ENCODE measurements at regions of chr2 and their contacts with region 1.

Region 1: GRCh38 chr2:55718165-55719008 is 24.7 kb upstream of the PNPT1 start:
- DNase-seq: no peak
- H3K4me3 ChIP-seq: no peak overlapping the region
- H3K27me3 ChIP-seq: no peaks in the 10 kb centered on the region
- CTCF ChIP-seq: peak; percentile 73

Region 2: GRCh38 chr2:55732854-55733253 is 14.5 kb after region 1 on chr2:
- CTCF ChIA-PET with region 1: interaction called, 12 read pairs
- POLR2A ChIA-PET with region 1: no interaction called
- DNase-seq: no peak
- H3K4me3 ChIP-seq: no peak overlapping the region
- H3K27me3 ChIP-seq: no peaks in the 10 kb centered on the region
- CTCF ChIP-seq: no peak

Region 3: GRCh38 chr2:55961318-55961911 is 243.0 kb after region 1 on chr2:
- CTCF ChIA-PET with region 1: interaction called, 24 read pairs
- POLR2A ChIA-PET with region 1: no interaction called
- DNase-seq: no peak
- H3K4me3 ChIP-seq: no peak overlapping the region
- H3K27me3 ChIP-seq: no peaks in the 10 kb centered on the region
- CTCF ChIP-seq: peak; percentile 66

Region 4: DNA sequence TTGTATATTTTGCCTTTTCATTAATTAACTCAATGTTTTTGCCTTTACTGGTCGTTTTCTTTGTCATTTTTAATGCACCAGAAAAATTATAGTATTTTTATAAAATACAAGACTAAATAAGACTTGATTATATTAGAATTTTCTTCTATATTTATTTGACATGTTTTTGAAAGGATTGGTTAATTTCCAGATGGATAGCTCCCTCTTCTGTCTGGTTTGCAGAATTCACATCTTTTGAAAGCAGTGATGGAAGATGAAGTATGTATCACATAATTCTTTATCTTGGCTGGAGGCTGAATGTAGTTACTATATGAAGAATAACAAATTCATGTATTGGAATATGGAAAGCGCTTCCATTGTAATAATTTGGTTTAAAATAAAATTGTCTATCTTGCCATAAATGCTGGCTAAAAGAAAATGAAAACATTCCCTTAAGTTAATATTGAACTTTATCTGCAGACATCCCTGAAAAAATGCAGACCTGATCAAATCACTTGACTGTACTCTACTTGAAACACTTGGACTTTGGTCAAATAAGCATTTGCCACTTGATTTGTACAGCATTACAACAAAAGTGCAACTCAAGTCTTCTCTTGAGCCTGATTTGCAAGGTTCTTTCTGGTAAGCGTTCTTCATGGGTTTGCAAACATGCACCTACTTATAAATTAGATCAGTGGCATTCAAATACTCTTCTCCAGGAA is 291.5 kb after region 1 on chr2:
- CTCF ChIA-PET with region 1: interaction called, 31 read pairs
- POLR2A ChIA-PET with region 1: no interaction called
- DNase-seq: no peak
- H3K4me3 ChIP-seq: no peak overlapping the region
- H3K27me3 ChIP-seq: no peaks in the 10 kb centered on the region
- CTCF ChIP-seq: peak; percentile 61